ENCODE measurements at regions of chr7 and their contacts with region 1.

Region 1: DNA sequence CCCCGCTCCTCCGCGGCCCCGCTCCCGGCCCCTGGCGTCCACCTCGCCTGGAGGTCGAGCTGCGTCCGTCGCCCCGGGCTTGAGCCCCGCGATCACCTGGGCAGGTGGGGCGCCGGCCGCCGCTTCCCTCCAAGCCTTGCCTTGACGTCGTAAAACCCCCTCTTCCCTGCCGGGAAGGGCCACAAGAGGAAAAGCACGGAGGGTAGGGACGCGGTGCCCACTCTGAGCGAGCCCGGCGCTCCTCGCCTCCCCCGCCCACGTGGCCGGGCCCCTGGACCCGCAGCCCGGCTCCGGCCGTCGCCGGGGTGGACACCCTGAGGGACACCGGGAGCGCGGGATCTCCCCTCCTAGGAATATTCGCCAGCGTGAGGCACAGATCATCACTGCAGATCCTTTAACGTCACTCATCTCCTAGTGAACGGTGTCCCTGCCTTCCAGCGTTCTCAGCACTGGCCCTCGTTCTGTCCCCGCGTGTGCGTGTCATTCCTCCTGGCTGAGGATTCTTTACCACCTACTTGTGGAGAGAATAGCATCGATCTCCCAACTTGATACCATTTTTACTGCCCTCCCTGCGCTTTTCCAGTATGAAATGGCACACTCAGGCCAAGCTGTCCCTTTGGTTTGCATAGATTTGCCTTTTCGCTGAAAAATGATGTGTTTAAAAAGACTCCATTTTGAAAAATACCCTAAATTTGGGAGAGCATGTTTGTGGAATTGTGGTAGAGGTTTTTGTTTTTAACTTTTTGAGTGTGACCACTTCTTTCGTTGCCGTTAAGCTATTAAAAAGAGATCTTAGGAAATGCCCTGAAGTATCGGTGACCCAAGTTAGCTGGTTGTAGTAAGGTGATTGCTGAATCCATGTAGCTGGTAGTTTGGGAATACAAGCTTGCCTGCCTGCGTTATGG is 649 bp downstream of the ACTR3B start:
- DNase-seq: no peak
- H3K4me3 ChIP-seq: peak overlapping the region; percentile 77
- H3K27ac ChIP-seq: peak overlapping the region; percentile 13
- H3K4me1 ChIP-seq: peaks cover 17% of the 10 kb centered on the region
- H3K27me3 ChIP-seq: no peaks in the 10 kb centered on the region
- CTCF ChIP-seq: no peak

Region 2: DNA sequence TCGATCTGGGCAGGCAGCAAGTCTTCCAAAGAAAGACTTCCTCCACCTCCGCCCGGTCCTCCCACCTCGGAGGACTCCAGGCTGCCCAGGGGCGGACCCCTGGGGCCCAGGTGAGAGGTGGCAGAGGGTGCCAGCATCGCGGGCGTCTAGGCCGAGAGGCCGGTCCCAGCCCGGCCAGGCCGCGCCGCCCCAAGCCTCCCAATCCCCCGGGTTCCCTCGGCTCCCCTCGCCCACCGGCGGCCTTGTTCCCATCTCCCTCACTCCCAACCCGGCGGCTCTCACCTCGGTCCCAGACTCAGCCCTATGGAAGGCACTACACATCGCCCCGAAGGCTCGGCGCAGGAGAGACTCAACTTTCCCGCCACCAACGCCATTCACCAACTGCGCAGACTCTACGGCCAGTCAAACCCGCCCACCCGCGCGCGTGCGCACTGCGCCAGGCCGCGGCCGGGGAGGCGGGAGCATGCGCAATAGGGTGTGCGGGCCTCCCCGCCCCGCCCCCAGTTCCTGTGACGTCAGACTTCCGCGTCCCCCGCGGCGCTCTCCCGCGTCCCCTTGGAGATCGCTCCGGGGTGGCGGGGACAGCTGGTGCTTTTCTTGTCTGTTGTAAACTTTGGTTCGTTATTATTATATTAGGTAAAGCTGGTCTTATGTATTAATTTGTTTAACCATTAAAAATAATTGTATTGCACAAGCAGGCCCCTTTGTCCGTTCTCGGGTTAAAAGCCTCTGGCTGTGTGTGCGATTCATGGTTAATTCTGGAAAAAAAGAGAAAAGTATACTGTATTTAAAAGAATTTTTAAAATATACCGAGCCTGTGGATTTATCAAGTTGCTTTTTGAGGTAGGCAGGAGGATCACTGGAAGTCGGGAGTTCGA is 84.2 kb before region 1 on chr7 and contains the start of gene XRCC2:
- CTCF ChIA-PET with region 1: no interaction called
- POLR2A ChIA-PET with region 1: no interaction called
- intact Hi-C with region 1: loop called (anchors 10 kb)
- DNase-seq: peak; percentile 76 to 97
- H3K4me3 ChIP-seq: peak within 1 kb of the TSS; percentile 93
- H3K27ac ChIP-seq: peak within 1 kb of the TSS; percentile 60
- H3K4me1 ChIP-seq: peaks cover 24% of the 10 kb centered on the region
- H3K27me3 ChIP-seq: no peaks in the 10 kb centered on the region
- CTCF ChIP-seq: no peak
- total RNA-seq, gene XRCC2: 21.2 and 25.0 TPM in 2 replicates

Region 3: DNA sequence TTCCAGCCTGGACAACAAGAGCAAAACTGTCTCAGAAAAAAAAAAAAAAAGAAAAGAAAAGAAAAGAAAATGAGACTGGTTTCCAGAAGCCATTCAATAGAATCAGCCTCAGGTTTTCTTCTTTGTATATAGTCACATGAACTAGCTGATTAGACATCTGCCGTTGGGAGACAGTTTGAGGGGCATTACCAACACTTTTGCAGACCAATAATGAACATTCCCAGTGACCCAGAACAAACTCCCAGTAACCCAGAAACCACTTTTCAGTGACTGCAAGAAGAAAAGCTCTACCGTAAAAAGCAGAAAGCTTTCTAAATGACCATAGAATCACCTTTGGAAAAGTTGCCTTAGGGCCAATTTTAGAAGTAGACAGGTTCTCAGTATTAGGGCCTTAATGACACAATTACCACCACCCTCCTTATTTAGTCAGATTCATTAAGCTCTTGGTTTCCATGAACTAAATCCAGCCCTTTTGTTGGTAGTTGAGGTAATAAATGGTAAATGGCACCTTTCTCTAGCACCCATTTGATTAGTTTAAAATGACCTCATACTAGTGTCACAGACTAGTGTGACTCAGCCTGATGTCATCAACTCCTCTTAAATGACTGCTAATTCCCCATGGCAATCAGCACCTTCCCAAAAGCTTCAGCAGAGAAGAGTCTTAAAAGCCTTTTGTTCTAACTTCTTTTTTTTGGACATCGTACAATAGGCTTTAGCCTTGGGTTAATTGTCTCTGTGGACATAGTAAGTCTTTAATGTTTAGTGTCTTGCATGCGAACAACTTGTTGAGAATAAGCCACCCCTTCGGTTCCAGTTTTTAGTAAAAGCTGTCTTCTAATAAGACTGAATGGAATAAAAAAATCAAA is 50.7 kb before region 1 on chr7:
- CTCF ChIA-PET with region 1: no interaction called
- POLR2A ChIA-PET with region 1: interaction called, 4 read pairs
- intact Hi-C with region 1: loop called (anchors 2 kb)
- DNase-seq: peak in 1 of 2 experiments; percentile 37
- H3K4me3 ChIP-seq: no peak overlapping the region
- H3K27ac ChIP-seq: no peak overlapping the region
- H3K4me1 ChIP-seq: peaks cover 18% of the 10 kb centered on the region
- H3K27me3 ChIP-seq: no peaks in the 10 kb centered on the region
- CTCF ChIP-seq: no peak